Activated T-helper 1 cell treated with anti-CD3 and anti-CD28 coated beads, Interleukin-12 subunit alpha, Interleukin-12 subunit beta, Interleukin-2, Interleukin-4 antibody, amounts not matched to agents 30 ng/mL and 10 ng/mL and 1 ng/mL, durations not matched to agents 14 hours and 24 hours and 36 hours (primary cell): ENCODE measurements at regions of chr15 and their contacts with region 1.

Region 1: DNA sequence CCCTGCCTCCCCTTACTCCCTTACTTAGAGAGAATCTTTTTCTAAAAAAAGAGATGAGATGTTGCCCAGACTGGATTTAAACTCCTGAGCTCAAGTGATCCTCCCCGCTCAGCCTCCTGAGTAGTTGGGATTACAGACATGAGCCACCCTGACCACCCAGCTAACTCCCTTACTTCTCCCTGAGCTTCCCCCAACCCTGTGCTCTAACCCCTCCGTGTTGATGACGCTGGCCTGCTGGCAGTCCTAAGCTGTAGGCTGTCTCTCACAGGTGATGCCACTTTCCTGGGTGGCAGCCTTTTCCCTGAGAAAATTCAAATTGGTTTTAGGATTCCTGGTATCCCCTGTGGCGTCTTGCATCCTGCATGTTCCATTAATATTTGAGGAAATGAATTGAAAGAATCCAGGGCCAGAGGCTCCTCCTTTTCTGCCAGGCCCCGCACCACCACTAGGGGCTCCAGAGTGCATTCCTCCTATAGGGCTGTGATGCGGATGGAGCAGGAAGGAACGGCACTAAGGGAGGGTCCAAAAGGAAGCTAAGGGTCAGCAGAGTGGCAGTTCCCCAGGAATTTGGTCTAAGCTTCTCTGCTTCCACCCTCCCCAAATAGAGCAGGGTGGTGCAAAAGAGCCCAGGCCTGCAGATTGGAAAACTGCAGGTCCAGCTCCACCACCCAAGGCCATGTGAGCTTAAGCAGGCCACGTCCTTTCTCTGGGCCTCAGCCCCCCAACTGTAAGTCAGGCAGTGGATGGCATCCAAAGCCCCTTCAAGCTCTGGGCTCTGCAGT is 101.1 kb downstream of the DAPK2 start:
- DNase-seq: peak; percentile 51
- H3K4me3 Mint-ChIP-seq: no peak overlapping the region
- H3K27ac Mint-ChIP-seq: peak overlapping the region; percentile 52
- H3K4me1 Mint-ChIP-seq: peaks cover 47% of the 10 kb centered on the region
- H3K27me3 Mint-ChIP-seq: no peaks in the 10 kb centered on the region

Region 2: GRCh38 chr15:63986751-63987341 is 41.6 kb after region 1 on chr15:
- intact Hi-C with region 1: loop called (anchors 5 kb)
- DNase-seq: no peak
- H3K4me3 Mint-ChIP-seq: no peak overlapping the region
- H3K27ac Mint-ChIP-seq: no peak overlapping the region
- H3K4me1 Mint-ChIP-seq: peaks cover 18% of the 10 kb centered on the region
- H3K27me3 Mint-ChIP-seq: no peaks in the 10 kb centered on the region